ENCODE measurements at regions of chr10 and their contacts with region 1.

Region 1: GRCh38 chr10:124671486-124672075 is 72.6 kb downstream of the FAM53B start:
- DNase-seq: peak; percentile 74
- H3K4me3 ChIP-seq: no peak overlapping the region
- H3K27ac ChIP-seq: peak overlapping the region in 1 of 2 experiments; percentile 45; a peak in 2 of 4 replicates
- H3K4me1 ChIP-seq: peaks cover 0 to 66% of the 10 kb centered on the region in 2 experiments; a peak in 3 of 4 replicates
- H3K27me3 ChIP-seq: no peaks in the 10 kb centered on the region
- CTCF ChIP-seq: 0 out of 2 replicates have a peak, but pooled peaks have one; percentile 11
- EP300 ChIP-seq: no peak
- RAD21 ChIP-seq: 0 out of 2 replicates have a peak, but pooled peaks have one; percentile 25

Region 2: DNA sequence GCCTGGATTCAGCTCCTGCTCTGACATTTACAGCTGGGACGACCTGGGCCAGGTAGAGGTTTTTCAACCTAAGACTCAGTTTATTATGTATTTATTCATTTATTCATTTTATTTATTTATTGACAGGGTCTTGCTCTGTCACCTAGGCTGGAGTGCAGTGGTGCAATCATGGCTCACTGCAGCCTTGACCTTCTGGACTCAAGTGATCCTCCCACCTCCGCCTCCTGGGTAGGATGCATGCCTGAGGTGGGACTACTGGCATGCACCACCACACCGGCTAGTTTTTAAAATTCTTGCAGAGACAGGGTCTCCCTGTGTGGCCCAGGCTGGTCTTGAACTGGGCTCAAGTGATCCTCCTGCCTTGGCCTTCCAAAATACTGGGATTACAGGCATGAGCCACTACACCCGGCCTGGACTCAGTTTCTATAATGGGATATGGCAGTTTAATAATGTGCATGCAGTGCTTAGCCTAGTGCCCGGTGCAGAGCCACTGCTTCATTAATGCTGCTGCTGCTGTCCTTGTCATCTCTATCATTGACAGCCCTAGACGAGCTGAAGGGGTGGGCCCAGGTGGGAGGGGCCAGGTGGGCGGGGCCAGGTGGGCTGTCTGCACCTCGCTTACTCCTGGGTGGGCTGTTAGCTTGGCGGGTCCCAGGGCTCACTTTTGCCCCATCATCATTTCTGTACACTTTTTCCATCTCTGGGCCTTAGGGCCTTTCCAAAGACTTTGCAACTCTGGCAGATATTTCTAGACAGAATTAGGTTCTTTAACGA is 117.3 kb before region 1 on chr10:
- CTCF ChIA-PET with region 1: no interaction called
- POLR2A ChIA-PET with region 1: no interaction called
- DNase-seq: no peak
- H3K4me3 ChIP-seq: no peak overlapping the region
- H3K27ac ChIP-seq: no peak overlapping the region
- H3K4me1 ChIP-seq: no peaks in the 10 kb centered on the region
- H3K27me3 ChIP-seq: no peaks in the 10 kb centered on the region
- CTCF ChIP-seq: no peak
- EP300 ChIP-seq: no peak
- RAD21 ChIP-seq: no peak

Region 3: GRCh38 chr10:124636271-124636995 is 35.1 kb before region 1 on chr10:
- CTCF ChIA-PET with region 1: no interaction called
- POLR2A ChIA-PET with region 1: no interaction called
- DNase-seq: no peak
- H3K4me3 ChIP-seq: no peak overlapping the region
- H3K27ac ChIP-seq: no peak overlapping the region
- H3K4me1 ChIP-seq: peaks cover 0 to 13% of the 10 kb centered on the region in 2 experiments; a peak in 1 of 4 replicates
- H3K27me3 ChIP-seq: no peaks in the 10 kb centered on the region
- CTCF ChIP-seq: no peak
- EP300 ChIP-seq: no peak
- RAD21 ChIP-seq: no peak

Region 4: DNA sequence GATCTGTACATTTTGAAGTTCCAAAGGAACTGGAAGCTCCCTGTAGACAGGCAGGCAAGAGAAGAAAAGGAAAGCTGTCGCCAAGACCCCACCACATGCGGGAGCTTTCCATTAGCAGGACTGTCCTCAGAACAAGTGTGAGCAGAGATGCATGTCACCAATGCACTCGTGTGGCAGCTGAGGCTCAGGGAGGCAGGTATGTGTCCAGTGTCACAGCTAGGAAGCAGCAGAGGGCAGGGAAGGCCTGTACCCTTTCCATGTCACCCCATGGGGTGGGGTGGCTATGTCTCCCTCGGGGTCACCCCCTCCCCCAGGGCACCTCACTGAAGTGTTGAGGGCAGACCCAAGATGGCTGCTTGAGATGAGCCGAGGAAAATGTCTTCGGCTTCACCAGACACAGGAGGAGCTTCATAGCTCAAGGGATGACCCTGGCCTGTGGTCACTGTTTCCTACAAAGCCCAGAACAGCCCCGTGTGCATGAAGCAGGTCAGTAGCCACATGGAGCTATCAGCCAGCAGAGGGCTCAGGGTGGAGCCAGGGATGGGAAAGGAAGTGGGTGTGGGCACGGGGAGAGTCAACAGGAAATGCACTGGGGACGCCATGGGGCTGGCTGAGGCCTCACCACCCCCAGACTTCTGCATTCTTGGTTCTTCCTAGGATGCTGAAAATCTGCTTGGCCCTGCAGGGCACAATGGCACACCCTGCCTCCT is 24.0 kb before region 1 on chr10:
- CTCF ChIA-PET with region 1: interaction called, 6 read pairs
- POLR2A ChIA-PET with region 1: interaction called, 10 read pairs
- DNase-seq: peak; percentile 64
- H3K4me3 ChIP-seq: no peak overlapping the region
- H3K27ac ChIP-seq: peak overlapping the region in 1 of 2 experiments; percentile 97; a peak in 2 of 4 replicates
- H3K4me1 ChIP-seq: peaks cover 24 to 86% of the 10 kb centered on the region in 2 experiments
- H3K27me3 ChIP-seq: no peaks in the 10 kb centered on the region
- CTCF ChIP-seq: no peak
- EP300 ChIP-seq: no peak
- RAD21 ChIP-seq: no peak; the same call in 1 of the 2 replicates

Region 5: GRCh38 chr10:124732931-124733570 is 61.5 kb after region 1 on chr10:
- CTCF ChIA-PET with region 1: interaction called, 10 read pairs
- POLR2A ChIA-PET with region 1: no interaction called
- DNase-seq: no peak
- H3K4me3 ChIP-seq: no peak overlapping the region
- H3K27ac ChIP-seq: peak overlapping the region in 1 of 2 experiments; percentile 8; a peak in 1 of 4 replicates
- H3K4me1 ChIP-seq: peaks cover 9 to 39% of the 10 kb centered on the region in 2 experiments; a peak in 2 of 4 replicates
- H3K27me3 ChIP-seq: no peaks in the 10 kb centered on the region
- CTCF ChIP-seq: no peak
- EP300 ChIP-seq: no peak
- RAD21 ChIP-seq: no peak